ENCODE measurements at regions of chr2 and their contacts with region 1.

Region 1: GRCh38 chr2:188976545-188977268 is 2.5 kb downstream of the COL3A1 start:
- DNase-seq: peak; percentile 18
- H3K4me3 ChIP-seq: no peak overlapping the region
- H3K27ac ChIP-seq: no peak overlapping the region
- H3K4me1 ChIP-seq: no peaks in the 10 kb centered on the region
- CTCF ChIP-seq: peak; percentile 79

Region 2: DNA sequence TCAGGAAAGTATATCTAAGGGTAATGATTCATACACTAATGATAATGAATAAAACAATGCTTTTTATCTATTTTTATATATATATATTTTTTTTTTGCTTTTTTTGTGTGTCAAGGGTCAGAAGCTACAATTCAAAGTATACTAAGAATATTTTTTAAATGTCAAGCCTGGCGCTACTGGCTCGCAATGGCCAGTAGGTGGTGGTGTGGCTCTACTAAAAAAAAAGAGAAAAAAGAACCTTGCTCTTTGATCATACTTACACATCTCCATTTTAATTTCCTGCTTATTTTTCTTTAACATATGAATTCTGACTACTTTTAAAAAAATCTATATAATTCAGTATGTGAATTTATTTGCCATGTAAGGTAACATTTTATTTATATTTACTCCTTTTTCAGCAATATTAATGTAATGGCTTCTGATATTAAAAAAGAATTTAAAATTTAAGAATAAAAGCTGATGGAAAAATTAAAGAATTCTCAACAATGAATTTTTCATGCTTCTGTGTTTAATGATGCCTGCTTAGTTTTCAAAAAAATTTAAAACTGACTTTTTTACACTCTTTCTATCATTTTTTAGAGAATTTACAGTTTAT is 452.1 kb before region 1 on chr2:
- CTCF ChIA-PET with region 1: no interaction called
- POLR2A ChIA-PET with region 1: no interaction called
- intact Hi-C with region 1: loop called (anchors 2 kb)
- DNase-seq: peak; percentile 40
- H3K4me3 ChIP-seq: no peak overlapping the region
- H3K27ac ChIP-seq: no peak overlapping the region
- H3K4me1 ChIP-seq: no peaks in the 10 kb centered on the region
- CTCF ChIP-seq: peak; percentile 80

Region 3: DNA sequence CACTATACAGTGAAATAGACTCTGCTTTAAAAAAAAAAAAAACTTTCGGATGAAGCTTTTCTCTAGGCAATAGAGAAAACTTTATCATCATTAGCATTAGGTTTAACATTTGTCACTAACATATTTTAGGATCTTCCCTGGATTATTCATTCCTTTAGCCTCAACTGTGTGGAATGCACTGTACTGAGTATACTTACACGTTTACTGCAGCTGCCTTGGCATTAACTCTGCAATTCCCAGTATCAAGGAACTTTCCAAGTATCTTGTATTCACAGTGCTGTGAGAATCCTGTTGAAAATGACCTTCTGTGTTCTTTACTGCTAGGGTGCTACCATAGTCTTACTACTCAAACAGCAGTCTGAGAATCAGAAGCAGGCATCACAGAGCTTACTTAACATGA is 330.7 kb before region 1 on chr2:
- CTCF ChIA-PET with region 1: no interaction called
- POLR2A ChIA-PET with region 1: no interaction called
- intact Hi-C with region 1: no loop called
- DNase-seq: no peak
- H3K4me3 ChIP-seq: no peak overlapping the region
- H3K27ac ChIP-seq: no peak overlapping the region
- H3K4me1 ChIP-seq: no peaks in the 10 kb centered on the region
- CTCF ChIP-seq: no peak